CD4-positive, alpha-beta T cell (primary cell): ENCODE measurements at regions of chr6 and their contacts with region 1.

Region 1: GRCh38 chr6:28537509-28538140 is 11.9 kb downstream of the GPX5 start:
- DNase-seq: peak in 8 of 14 experiments; percentile 20 to 70 (median 44)
- ATAC-seq: peak; percentile 78
- H3K4me3 ChIP-seq: peak overlapping the region; percentile 15
- H3K4me3 Mint-ChIP-seq: peak overlapping the region; percentile 85
- H3K27ac ChIP-seq: no peak overlapping the region
- H3K27ac Mint-ChIP-seq: peak overlapping the region; percentile 92
- H3K4me1 ChIP-seq: peaks cover 5% of the 10 kb centered on the region
- H3K4me1 Mint-ChIP-seq: peaks cover 33% of the 10 kb centered on the region
- H3K27me3 ChIP-seq: peaks cover 8 to 20% of the 10 kb centered on the region in 2 experiments
- H3K27me3 Mint-ChIP-seq: peaks cover 75% of the 10 kb centered on the region
- CTCF ChIP-seq: no peak

Region 2: DNA sequence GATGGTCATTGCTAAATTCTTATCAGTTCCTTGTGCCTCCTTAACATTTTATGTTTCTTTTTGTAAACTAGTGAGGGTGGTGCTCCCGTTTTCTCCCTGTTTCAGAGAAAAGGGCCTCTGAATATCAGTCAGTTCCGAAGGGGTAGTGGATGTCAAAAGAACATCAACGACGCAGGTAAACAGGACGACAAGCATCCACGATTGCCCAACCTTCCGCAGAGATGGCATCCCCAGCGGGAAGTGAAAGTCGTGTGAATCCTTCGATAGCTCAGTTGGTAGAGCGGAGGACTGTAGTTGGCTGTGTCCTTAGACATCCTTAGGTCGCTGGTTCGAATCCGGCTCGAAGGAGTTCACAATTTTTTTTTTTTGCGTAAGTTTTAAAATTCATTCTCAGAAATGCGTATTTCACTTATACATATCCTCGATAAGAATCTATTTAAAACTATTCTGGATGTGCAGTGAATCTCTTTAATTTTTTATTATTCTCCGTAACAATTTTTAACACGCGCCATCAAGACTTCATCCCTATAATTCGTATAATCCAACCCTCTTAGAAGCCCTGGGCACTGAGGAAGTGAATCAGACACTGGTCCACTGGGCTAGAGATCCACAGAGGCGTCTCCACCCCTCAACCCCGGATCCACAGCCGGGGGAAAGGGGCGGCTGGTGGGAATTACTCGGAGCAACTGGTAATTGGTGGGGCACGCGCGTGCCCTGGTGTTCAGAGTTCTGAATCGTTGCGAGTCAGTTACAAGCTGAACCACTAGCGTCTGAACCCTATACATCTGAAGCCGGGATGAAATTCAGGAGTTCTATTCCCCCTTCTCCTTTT is 1968.8 kb before region 1 on chr6:
- CTCF ChIA-PET with region 1: no interaction called
- POLR2A ChIA-PET with region 1: no interaction called
- intact Hi-C with region 1: loop called in 1 of 2 experiments (anchors 5 kb)
- DNase-seq: peak; percentile 96 to 100 (median 98)
- ATAC-seq: peak; percentile 74
- H3K4me3 ChIP-seq: peak overlapping the region; percentile 55
- H3K4me3 Mint-ChIP-seq: peak overlapping the region; percentile 97
- H3K27ac ChIP-seq: peak overlapping the region; percentile 37 to 53
- H3K27ac Mint-ChIP-seq: peak overlapping the region; percentile 100
- H3K4me1 ChIP-seq: peaks cover 21% of the 10 kb centered on the region
- H3K4me1 Mint-ChIP-seq: peaks cover 29% of the 10 kb centered on the region
- H3K27me3 ChIP-seq: no peaks in the 10 kb centered on the region
- H3K27me3 Mint-ChIP-seq: peaks cover 16% of the 10 kb centered on the region
- CTCF ChIP-seq: peak; percentile 58

Region 3: DNA sequence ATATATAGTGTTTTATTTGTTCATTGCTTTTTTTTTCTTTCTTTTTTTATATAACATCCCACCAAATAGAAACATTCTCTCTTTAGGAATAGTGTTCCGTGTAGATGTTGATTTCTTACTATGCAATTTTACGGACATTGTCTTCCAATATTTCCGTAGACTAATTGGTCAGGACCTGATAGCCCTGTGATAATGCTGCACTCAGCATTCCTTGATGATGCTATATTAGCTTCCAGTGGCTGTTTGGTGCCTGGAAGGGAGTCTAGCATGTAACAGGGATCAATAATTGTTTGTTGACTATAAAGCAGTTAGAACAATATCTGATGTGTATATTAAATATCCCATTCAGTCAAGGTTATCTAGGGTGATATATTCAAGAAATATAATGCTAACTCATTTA is 514.1 kb after region 1 on chr6:
- CTCF ChIA-PET with region 1: no interaction called
- POLR2A ChIA-PET with region 1: no interaction called
- intact Hi-C with region 1: no loop called
- DNase-seq: no peak
- ATAC-seq: no peak
- H3K4me3 ChIP-seq: no peak overlapping the region
- H3K4me3 Mint-ChIP-seq: no peak overlapping the region
- H3K27ac ChIP-seq: no peak overlapping the region
- H3K27ac Mint-ChIP-seq: no peak overlapping the region
- H3K4me1 ChIP-seq: no peaks in the 10 kb centered on the region
- H3K4me1 Mint-ChIP-seq: no peaks in the 10 kb centered on the region
- H3K27me3 ChIP-seq: peaks cover 2 to 43% of the 10 kb centered on the region in 2 experiments
- H3K27me3 Mint-ChIP-seq: peaks cover 56% of the 10 kb centered on the region
- CTCF ChIP-seq: no peak